ENCODE measurements at regions of chr1 and their contacts with region 1.

Region 1: GRCh38 chr1:31715087-31715872 is 11.5 kb upstream of the COL16A1 start:
- DNase-seq: peak; percentile 95
- H3K4me3 ChIP-seq: peak overlapping the region; percentile 44 to 50
- H3K27ac ChIP-seq: peak overlapping the region; percentile 94 to 95
- H3K4me1 ChIP-seq: peaks cover 41 to 54% of the 10 kb centered on the region in 2 experiments; a peak in 3 of 4 replicates
- H3K27me3 ChIP-seq: no peaks in the 10 kb centered on the region
- CTCF ChIP-seq: peak; percentile 79
- EP300 ChIP-seq: no peak
- RAD21 ChIP-seq: peak; percentile 66

Region 2: GRCh38 chr1:31593770-31594632 is 121.3 kb before region 1 on chr1:
- CTCF ChIA-PET with region 1: no interaction called
- POLR2A ChIA-PET with region 1: no interaction called
- DNase-seq: peak; percentile 76
- H3K4me3 ChIP-seq: peak overlapping the region in 1 of 2 experiments; percentile 0; a peak in 1 of 4 replicates
- H3K27ac ChIP-seq: no peak overlapping the region
- H3K4me1 ChIP-seq: peaks cover 9 to 10% of the 10 kb centered on the region in 2 experiments
- H3K27me3 ChIP-seq: no peaks in the 10 kb centered on the region
- CTCF ChIP-seq: peak; percentile 90
- EP300 ChIP-seq: no peak
- RAD21 ChIP-seq: peak; percentile 72

Region 3: DNA sequence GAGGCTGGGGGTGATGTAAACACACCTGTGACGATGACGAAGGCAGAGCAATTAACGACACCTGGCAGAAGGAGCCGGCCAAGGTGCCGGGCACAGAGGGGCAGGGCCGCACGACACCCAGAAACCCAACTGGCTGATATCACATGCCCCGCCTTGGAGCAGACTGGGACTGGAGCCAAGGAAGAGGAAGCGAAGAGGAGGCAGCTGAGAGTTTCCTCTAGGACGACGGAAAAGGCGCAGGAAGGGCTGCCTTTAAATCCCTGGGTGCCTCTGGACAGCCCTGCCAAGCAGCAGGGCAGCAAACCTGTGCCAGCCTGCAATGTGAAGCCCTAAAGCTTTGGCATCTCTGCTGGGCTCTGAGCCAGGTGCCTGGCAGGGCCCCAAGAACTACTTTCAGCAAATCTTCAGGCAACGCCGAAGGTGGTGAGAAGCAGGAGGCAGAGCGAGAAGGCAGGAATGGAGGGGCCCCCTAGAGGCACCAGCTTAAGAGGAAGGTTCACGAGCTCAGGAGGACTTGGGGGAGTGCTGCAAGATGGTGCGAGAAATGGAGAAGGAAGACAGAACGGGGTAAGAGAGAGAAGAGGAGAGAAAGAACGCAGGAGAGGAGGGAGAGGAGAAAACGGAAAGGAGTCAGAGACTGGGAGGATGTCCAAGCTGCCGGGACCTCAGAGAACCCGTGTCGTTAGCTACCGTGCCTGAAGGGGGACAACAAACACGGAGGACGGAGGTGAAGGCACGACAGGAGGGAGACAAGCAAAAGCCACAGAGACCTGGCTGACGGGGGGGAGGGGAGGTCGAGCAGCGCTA is 45.3 kb before region 1 on chr1:
- CTCF ChIA-PET with region 1: interaction called, 134 read pairs
- POLR2A ChIA-PET with region 1: no interaction called
- DNase-seq: peak; percentile 56
- H3K4me3 ChIP-seq: no peak overlapping the region
- H3K27ac ChIP-seq: peak overlapping the region in 1 of 2 experiments; percentile 68; a peak in 3 of 4 replicates
- H3K4me1 ChIP-seq: peaks cover 18 to 48% of the 10 kb centered on the region in 2 experiments
- H3K27me3 ChIP-seq: no peaks in the 10 kb centered on the region
- CTCF ChIP-seq: peak; percentile 37
- EP300 ChIP-seq: no peak
- RAD21 ChIP-seq: no peak

Region 4: DNA sequence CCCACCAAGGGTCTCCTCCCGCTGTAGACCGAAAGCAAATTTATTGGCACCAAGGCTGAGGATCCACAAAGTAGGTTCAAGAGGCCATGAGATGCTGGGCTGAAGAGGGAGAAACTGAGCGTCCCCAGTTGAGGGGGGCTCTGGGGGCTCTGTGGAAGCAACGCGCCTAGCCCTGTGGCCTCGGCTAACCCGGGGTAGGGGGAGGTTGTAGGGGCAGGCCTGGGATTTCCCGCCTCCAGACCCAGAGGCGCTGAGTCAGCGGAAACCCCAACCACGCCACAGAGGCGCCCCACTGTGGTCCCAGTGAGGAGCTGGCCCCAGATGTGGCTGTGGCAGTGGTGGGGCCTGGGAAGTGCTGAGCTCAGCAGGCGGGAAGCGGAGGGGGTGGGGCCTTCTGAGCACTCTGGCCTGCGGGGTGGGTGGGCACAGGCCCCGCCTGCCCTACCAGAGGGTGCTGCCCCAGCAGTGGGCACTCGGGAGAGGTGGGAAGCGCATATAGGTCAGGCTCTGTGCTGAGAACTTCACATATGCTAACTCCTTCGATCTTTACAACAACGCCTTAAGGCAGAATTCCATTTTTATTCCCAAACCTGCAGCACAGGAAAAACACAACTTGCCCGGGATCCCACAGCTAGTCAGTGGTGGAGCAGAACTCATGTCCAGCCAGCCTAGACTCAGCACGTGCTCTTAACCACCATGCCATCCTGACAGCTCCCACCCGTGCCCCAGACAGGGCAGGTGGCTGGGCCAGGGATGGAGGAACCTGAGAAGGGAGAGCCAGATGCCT is 10.0 kb before region 1 on chr1:
- CTCF ChIA-PET with region 1: interaction called, 116 read pairs
- POLR2A ChIA-PET with region 1: interaction called, 5 read pairs
- DNase-seq: peak; percentile 62
- H3K4me3 ChIP-seq: no peak overlapping the region
- H3K27ac ChIP-seq: no peak overlapping the region
- H3K4me1 ChIP-seq: peaks cover 27 to 62% of the 10 kb centered on the region in 2 experiments
- H3K27me3 ChIP-seq: no peaks in the 10 kb centered on the region
- CTCF ChIP-seq: no peak
- EP300 ChIP-seq: no peak
- RAD21 ChIP-seq: peak; percentile 15; the same call in 1 of the 2 replicates

Region 5: DNA sequence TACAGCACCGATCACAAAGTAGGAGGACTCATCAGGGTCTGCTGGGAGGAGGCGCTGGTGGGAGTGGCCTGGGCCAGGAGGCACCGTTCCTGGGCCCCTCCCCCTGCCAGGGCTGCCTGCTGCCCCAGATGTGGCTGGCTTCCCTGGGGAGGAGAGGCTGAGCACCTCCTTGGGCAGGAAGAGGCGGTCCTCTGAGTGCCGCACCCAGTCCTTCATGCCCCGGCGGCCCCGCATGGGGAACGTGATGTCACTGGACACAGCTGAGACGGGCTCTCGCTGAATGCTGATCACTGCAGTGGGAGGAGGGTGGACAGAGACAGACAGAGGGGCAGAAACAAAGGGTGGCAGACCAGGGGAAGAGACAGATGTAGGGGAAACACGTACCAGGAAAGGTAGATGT is 24.1 kb after region 1 on chr1:
- CTCF ChIA-PET with region 1: interaction called, 62 read pairs
- POLR2A ChIA-PET with region 1: interaction called, 3 read pairs
- DNase-seq: no peak
- H3K4me3 ChIP-seq: no peak overlapping the region
- H3K27ac ChIP-seq: no peak overlapping the region
- H3K4me1 ChIP-seq: peaks cover under 1 to 4% of the 10 kb centered on the region in 2 experiments; a peak in 2 of 4 replicates
- H3K27me3 ChIP-seq: no peaks in the 10 kb centered on the region
- CTCF ChIP-seq: no peak
- EP300 ChIP-seq: no peak
- RAD21 ChIP-seq: no peak

Region 6: DNA sequence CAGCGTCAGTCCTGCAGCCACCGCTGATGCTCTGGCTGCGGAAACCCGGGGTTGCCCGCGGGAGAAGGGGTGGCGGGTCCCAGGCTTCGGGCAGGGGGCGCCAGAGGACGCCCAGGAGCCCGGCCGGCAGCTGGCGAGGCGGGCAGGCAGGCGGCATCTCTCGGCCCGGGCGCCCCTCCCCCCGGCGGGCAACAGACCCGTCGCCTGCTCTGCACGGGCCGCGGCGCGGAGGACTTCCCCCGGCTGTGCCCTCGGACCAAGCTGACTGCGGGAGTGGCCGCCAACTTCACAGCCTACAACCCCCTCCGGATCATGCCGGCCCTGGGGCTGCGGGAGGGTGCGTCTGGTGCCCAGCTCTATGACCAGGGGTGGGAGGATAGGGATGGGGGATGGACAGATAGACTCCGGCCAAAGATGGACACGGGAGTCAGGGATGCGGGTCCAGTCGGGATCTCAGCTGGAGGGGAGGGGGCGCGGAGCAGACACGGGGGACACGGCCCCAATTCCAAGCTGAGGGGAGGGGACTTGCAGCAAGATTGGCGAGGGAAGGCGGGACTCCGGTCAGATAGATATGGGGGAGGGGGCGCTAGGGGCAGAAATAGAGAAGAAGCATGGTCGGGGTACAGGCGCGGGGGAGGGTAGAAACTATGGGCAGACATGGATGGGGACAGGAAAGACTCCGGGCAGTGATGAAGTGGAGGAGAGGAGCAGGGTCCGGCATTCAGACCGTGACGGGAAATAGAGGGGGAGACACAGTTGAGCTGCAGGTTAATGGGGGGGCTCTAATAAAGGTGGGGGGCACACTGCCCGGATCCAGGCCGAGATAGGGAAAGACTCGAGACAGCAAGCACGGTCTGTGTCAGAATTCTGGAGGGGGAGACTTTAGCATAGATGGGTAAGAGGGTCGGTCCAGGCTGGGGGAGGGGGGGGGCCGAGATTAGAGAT is 47.7 kb after region 1 on chr1:
- CTCF ChIA-PET with region 1: interaction called, 156 read pairs
- POLR2A ChIA-PET with region 1: interaction called, 5 read pairs
- DNase-seq: peak; percentile 97
- H3K4me3 ChIP-seq: peak overlapping the region; percentile 74 to 75
- H3K27ac ChIP-seq: peak overlapping the region in 1 of 2 experiments; percentile 85; a peak in 2 of 4 replicates
- H3K4me1 ChIP-seq: peaks cover 27 to 66% of the 10 kb centered on the region in 2 experiments
- H3K27me3 ChIP-seq: no peaks in the 10 kb centered on the region
- CTCF ChIP-seq: peak; percentile 62
- EP300 ChIP-seq: peak in 1 of 2 experiments; percentile 34; a peak in 1 of 4 replicates
- RAD21 ChIP-seq: peak; percentile 75

Measured in SK-N-SH (cell line).